ENCODE measurements at regions of chr11 and their contacts with region 1.

Region 1: GRCh38 chr11:57144531-57145320 is 37.0 kb upstream of the LRRC55 start:
- DNase-seq: no peak
- H3K4me3 ChIP-seq: no peak overlapping the region
- H3K27ac ChIP-seq: no peak overlapping the region
- H3K4me1 ChIP-seq: no peaks in the 10 kb centered on the region
- H3K27me3 ChIP-seq: no peaks in the 10 kb centered on the region
- CTCF ChIP-seq: no peak

Region 2: DNA sequence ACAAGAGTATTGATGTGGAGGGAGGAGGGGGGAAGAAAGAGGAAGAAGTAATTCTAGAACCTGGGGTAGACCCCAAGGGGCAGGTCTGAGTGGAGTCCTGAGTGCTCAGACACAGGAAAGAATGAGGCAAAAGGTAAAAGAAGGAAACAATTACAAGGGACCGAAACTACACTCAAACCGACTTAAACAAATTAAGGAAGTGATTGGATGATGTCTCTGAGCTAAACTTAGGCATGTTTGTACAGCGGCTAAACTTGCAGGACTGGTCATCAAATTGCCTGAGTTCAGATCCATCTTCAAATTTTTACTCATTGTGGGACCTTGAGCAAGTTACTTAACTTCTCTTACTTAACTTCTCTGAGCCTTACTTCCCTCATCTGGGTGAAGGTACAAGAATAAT is 49.3 kb before region 1 on chr11:
- CTCF ChIA-PET with region 1: no interaction called
- POLR2A ChIA-PET with region 1: no interaction called
- intact Hi-C with region 1: loop called (anchors 5 kb)
- DNase-seq: no peak
- H3K4me3 ChIP-seq: no peak overlapping the region
- H3K27ac ChIP-seq: no peak overlapping the region
- H3K4me1 ChIP-seq: no peaks in the 10 kb centered on the region
- H3K27me3 ChIP-seq: peaks cover 4% of the 10 kb centered on the region
- CTCF ChIP-seq: no peak

Measured in A673 (cell line).